Activated CD8-positive, alpha-beta T cell treated with anti-CD3 and anti-CD28 coated beads, Interleukin-2, amount 10 ng/mL, durations not matched to agents 7 days and 5 days (primary cell): ENCODE measurements at regions of chr9 and their contacts with region 1.

Region 1: DNA sequence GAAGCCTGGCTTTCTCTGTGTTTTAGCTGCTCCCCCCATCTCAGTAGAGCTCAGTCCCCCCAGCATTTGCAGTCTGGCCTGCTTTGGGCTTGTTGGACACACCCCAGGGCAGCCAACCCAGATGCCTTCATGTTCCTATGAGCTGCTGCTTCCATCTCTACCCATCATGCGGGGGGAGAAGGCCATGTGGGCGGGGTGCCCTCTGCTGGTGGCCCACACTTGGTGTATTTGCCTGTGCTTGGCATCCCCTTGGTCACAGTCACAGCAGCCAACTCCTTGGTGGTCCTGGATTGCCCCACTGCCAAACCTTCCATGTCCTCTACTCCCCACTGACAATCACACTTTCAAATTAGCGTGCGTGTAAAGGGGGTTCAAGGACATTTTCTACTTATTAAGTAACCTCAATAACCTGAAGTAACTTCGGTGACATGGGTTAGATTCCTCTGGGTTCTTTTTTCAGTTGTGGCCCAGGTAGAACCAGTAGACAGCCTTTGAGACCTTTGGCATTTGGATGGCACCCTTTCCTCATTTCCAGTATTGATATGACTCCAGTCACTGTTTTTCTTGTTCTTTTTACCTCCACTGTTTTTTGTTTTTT is 42.8 kb downstream of the SNX30 start:
- DNase-seq: peak; percentile 89
- ATAC-seq: peak; percentile 99
- H3K4me3 Mint-ChIP-seq: no peak overlapping the region
- H3K27ac Mint-ChIP-seq: no peak overlapping the region
- H3K4me1 Mint-ChIP-seq: peaks cover 6% of the 10 kb centered on the region
- H3K27me3 Mint-ChIP-seq: no peaks in the 10 kb centered on the region

Region 2: DNA sequence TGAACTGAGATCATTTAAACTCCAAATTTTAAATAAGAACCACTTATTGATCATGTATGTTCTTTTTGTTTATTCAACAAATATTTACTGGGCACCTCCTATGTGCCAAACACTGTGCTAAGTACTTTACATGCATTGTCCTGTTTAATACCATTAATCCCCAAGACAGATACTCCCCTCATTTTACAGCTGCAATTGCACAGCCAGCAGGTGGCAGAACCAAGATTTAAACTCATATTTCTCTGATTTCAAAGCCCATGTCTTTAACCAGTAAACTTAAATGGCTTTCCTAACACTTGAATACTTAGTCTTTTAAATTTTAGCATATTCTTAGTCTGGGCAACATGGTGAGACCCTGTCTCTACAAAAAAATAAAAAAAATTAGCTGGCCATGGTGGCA is 350.1 kb before region 1 on chr9:
- CTCF ChIA-PET with region 1: interaction called, 24 read pairs
- POLR2A ChIA-PET with region 1: no interaction called
- DNase-seq: peak; percentile 49
- ATAC-seq: no peak
- H3K4me3 Mint-ChIP-seq: no peak overlapping the region
- H3K27ac Mint-ChIP-seq: no peak overlapping the region
- H3K4me1 Mint-ChIP-seq: peaks cover 6% of the 10 kb centered on the region
- H3K27me3 Mint-ChIP-seq: no peaks in the 10 kb centered on the region

Region 3: DNA sequence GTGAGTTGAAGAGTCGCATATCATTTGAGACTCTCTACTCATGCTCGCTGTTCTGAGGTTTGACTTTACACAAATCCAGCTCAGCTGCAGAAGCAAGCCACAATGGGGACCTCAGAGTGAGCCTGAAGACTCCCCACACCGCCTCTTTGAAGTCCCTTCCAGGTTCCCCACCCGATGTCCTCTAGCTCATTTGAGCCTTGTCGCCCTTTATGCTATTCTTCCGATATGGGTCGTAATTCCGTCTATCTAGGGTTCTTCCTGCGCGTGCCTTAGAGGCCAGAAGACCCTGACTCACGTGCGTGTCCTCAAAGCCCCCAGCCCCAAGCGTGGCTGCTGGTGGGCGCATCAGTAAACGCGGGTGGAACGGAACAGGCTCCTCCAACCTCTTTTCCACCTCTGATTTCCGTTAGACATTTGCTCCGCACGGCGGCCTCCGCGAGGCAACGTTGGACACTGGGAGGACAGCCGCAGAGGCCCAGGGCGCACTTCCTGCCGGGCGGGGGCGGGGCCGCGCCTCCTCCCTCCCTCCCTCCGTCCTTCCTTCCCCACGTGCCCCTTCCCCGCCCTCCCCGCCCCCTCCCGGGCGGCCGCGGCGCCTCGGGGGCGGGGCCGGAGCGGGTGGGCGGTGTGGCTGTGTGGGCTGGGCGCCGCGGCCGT is 43.1 kb before region 1 on chr9 and contains the start of gene SNX30:
- CTCF ChIA-PET with region 1: interaction called, 12 read pairs
- POLR2A ChIA-PET with region 1: no interaction called
- DNase-seq: peak; percentile 83
- ATAC-seq: peak; percentile 62
- H3K4me3 Mint-ChIP-seq: peak within 1 kb of the TSS; percentile 77
- H3K27ac Mint-ChIP-seq: peak within 1 kb of the TSS; percentile 88
- H3K4me1 Mint-ChIP-seq: peaks cover 66% of the 10 kb centered on the region
- H3K27me3 Mint-ChIP-seq: no peaks in the 10 kb centered on the region
- total RNA-seq, gene SNX30: 5.5 to 7.2 TPM

Region 4: DNA sequence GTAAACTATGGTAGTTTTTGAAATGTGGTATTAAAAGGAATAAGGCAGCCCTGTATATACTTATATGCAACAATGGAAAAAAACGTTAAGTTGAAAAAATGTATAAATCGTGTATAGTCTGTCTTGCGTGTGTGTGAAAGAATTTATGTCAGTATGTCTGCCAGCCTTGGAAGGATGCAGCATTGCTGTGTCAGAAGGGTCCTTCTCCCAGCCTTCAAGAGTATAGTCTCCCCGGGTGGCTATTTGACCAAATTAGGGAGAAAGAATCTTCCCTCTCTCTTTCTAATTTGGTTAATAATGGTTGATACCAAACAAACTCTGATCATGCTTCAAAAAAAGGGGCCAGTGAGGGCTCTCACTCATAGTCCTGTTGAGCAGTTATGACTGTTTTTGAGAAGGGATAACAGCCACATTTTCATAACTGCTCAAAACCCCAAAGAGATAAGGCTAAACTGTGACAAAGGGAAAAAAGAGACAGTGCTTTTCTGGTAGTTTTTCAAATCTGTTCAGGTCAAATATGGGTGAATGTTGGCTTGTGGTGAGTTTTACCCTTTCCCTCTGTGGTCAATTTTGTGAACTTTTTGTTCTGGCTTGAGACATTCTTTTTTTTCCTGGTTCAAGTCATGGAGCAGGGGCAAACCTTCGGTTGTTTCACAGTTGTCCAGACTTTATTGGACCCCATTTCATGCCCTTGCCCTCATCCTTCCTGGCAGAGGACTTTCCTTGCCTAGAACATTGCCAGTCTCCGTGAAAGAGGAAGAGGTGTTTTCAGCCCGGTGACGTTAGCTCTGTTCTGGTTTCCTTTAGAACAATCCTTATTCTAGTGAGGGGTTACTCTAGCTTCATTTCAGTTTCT is 21.7 kb before region 1 on chr9:
- CTCF ChIA-PET with region 1: no interaction called
- POLR2A ChIA-PET with region 1: no interaction called
- DNase-seq: no peak
- ATAC-seq: peak; percentile 57
- H3K4me3 Mint-ChIP-seq: no peak overlapping the region
- H3K27ac Mint-ChIP-seq: peak overlapping the region; percentile 13
- H3K4me1 Mint-ChIP-seq: peaks cover 27% of the 10 kb centered on the region
- H3K27me3 Mint-ChIP-seq: peaks cover 11% of the 10 kb centered on the region